ENCODE measurements at regions of chr22 and their contacts with region 1.

Region 1: DNA sequence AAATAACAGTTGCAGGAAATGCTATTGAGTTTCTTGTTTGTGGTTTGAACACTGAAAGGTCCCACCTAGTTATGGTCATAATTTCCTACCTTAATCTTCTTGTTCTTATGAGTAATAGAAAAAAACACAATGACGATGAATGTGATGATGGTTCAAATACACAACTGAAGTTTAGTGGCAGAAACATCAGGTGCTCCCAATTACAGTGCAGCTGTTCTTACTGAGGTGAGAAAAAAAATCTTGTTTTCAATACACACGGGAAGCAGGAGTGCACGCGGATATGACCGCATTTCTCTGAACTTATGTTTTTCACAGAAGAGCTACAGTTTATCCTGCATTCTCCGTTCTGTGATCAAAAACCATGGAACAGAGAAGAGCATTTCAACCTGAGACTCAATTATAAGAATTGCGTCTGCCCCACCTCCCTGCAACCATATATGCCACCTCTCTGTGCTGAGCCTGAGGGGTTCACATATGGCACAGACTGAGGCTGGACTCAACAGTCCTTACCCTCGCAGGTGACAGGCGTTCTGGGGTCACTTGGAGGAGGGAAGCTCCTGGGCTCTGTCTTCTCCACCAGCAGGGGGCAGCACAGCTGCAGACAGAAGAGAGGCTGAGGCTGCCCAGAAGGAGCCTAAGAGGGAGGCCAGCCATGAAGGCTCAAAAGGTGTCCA is 99.7 kb upstream of the IGLL5 start:
- DNase-seq: no peak
- ATAC-seq: peak; percentile 92
- H3K4me3 ChIP-seq: no peak overlapping the region
- H3K27ac ChIP-seq: no peak overlapping the region
- H3K4me1 ChIP-seq: no peaks in the 10 kb centered on the region
- H3K27me3 ChIP-seq: no peaks in the 10 kb centered on the region
- CTCF ChIP-seq: peak; percentile 49 to 79 (median 59)
- EP300 ChIP-seq: no peak
- POLR2A ChIP-seq: no peak
- RAD21 ChIP-seq: no peak

Region 2: DNA sequence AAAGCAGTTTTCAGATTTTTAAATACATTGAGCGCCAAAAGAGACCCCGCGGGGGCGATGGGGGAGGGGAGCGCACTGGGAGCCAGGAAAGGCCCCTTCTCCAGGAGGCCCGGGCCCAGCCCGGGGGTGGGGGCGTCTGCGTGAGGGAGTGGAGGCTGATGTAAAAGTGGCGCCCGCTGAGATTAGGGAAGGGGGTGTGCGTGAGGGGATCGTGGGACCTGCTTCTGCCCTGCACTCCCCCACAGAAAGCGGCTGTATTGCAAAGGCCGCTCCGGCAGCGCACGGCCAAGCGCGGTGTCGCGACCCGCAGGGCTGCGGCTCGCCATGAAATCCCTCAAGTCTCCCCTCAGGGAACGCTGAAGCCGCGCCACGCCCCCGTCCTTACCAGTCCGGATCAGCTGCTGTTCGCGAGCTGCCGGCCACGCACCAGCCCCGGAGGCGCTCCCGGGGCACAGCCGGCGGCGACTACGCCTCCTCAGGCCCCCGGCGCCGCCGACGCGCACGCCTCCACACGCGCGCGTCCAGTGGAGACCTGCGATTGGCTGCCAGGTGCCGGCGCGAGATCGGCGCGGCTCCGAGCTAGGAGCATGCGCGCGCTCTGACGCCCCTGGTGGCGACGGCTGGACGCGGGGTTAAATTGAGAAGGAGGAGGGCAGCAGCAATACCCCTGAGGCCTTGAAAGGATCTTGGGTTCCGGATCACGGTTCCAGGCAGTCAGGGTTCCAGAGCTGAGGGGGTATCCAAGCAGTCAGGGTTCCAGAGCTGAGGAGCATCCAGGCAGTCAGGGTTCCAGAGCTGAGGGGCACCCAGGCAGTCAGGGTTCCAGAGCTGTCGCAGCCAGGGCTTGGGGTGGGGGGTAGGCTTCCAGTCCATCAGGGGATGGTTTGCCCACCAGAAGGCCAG is 279.4 kb before region 1 on chr22 and contains the start of gene ZNF280B:
- CTCF ChIA-PET with region 1: no interaction called
- POLR2A ChIA-PET with region 1: no interaction called
- RAD21 ChIA-PET with region 1: no interaction called
- SMC1A ChIA-PET with region 1: no interaction called
- in situ Hi-C with region 1: no loop called
- intact Hi-C with region 1: no loop called
- DNase-seq: peak; percentile 43
- ATAC-seq: peak; percentile 100
- H3K4me3 ChIP-seq: peak within 1 kb of the TSS; percentile 77
- H3K27ac ChIP-seq: no peak within 1 kb of the TSS
- H3K4me1 ChIP-seq: no peaks in the 10 kb centered on the region
- H3K27me3 ChIP-seq: no peaks in the 10 kb centered on the region
- CTCF ChIP-seq: peak; percentile 55 to 66 (median 66)
- EP300 ChIP-seq: no peak
- POLR2A ChIP-seq: peak; percentile 74
- RAD21 ChIP-seq: no peak
- polyA plus RNA-seq, gene ZNF280B: 0.49 to 1.2 TPM

Region 3: GRCh38 chr22:22770280-22770871 is 17.5 kb before region 1 on chr22:
- CTCF ChIA-PET with region 1: interaction called, 26 read pairs
- POLR2A ChIA-PET with region 1: no interaction called
- RAD21 ChIA-PET with region 1: no interaction called
- SMC1A ChIA-PET with region 1: interaction called, 14 read pairs
- in situ Hi-C with region 1: no loop called
- intact Hi-C with region 1: no loop called
- DNase-seq: no peak
- ATAC-seq: peak; percentile 58
- H3K4me3 ChIP-seq: no peak overlapping the region
- H3K27ac ChIP-seq: no peak overlapping the region
- H3K4me1 ChIP-seq: no peaks in the 10 kb centered on the region
- H3K27me3 ChIP-seq: no peaks in the 10 kb centered on the region
- CTCF ChIP-seq: peak; percentile 29 to 61 (median 43); a peak in 4 of 6 replicates
- EP300 ChIP-seq: no peak
- POLR2A ChIP-seq: no peak
- RAD21 ChIP-seq: no peak

Region 4: DNA sequence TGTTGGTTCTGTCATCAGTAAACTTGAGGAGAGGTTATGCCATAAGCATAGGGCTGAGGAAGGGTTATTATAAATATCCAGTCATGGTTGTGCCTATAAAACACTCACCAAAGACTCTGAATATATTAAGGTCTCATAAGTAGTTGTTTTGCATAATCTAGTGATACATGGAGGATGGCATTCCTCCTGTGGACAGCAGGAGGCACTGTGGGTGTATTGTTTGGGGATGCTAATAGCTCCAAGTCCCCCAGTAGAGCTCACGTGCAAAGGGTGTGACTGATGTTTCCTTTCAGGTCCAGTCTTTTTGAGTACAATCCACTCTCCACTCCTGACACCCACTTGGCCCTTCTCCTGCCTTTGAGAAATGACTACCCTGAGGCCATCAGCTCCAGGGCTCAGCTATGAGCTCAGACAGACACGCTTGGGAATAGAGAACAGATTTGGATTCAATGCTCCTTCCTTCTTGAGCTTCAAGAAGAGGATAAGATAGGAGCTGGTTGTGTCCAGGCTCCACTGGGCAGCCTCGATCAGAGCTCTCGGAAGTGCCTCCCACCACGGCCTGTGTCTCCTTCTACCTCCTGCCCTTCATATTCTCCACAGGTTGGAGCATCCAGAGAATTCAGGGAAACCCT is 14.5 kb after region 1 on chr22:
- CTCF ChIA-PET with region 1: interaction called, 43 read pairs
- POLR2A ChIA-PET with region 1: interaction called, 3 read pairs
- RAD21 ChIA-PET with region 1: interaction called, 6 read pairs
- SMC1A ChIA-PET with region 1: interaction called, 4 read pairs
- in situ Hi-C with region 1: no loop called
- intact Hi-C with region 1: no loop called
- DNase-seq: no peak
- ATAC-seq: peak; percentile 54
- H3K4me3 ChIP-seq: no peak overlapping the region
- H3K27ac ChIP-seq: no peak overlapping the region
- H3K4me1 ChIP-seq: no peaks in the 10 kb centered on the region
- H3K27me3 ChIP-seq: no peaks in the 10 kb centered on the region
- CTCF ChIP-seq: peak; percentile 19 to 39 (median 34); a peak in 4 of 6 replicates
- EP300 ChIP-seq: no peak
- POLR2A ChIP-seq: no peak
- RAD21 ChIP-seq: no peak